ENCODE measurements at regions of chr10 and their contacts with region 1.

Region 1: DNA sequence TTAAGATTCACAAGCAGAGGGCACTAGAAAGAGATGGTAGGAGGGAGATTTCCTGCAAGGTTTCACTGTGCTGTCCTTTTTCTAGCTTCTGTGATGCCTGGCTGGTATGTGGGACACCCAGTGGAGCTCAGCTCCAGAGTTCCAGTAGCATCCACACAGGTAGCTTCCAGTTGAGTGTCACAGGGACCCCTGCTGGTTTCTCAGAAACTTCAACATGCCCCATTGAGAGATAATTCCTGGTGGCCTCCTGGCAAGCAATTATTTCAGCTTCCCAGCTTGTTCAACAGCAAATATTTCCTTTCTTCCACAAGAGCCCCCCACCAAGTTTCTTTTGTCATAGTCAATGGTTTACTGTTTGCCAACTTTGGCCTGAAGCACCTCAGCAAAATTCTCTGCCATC is 858.7 kb downstream of the REEP3 start:
- DNase-seq: no peak
- ATAC-seq: no peak
- H3K4me3 ChIP-seq: no peak overlapping the region
- H3K4me3 Mint-ChIP-seq: no peak overlapping the region
- H3K27ac ChIP-seq: no peak overlapping the region
- H3K27ac Mint-ChIP-seq: no peak overlapping the region
- H3K4me1 ChIP-seq: no peaks in the 10 kb centered on the region
- H3K4me1 Mint-ChIP-seq: no peaks in the 10 kb centered on the region
- H3K27me3 ChIP-seq: no peaks in the 10 kb centered on the region
- H3K27me3 Mint-ChIP-seq: no peaks in the 10 kb centered on the region

Region 2: GRCh38 chr10:64041185-64041988 is 338.5 kb before region 1 on chr10:
- CTCF ChIA-PET with region 1: no interaction called
- POLR2A ChIA-PET with region 1: no interaction called
- intact Hi-C with region 1: loop called in 1 of 2 experiments (anchors 10 kb)
- DNase-seq: peak; percentile 63 to 90 (median 85)
- ATAC-seq: peak; percentile 99
- H3K4me3 ChIP-seq: peak overlapping the region; percentile 55
- H3K4me3 Mint-ChIP-seq: peak overlapping the region; percentile 50 to 83 (median 70)
- H3K27ac ChIP-seq: no peak overlapping the region
- H3K27ac Mint-ChIP-seq: peak overlapping the region in 1 of 9 donors; percentile 50
- H3K4me1 ChIP-seq: peaks cover 0 to 4% of the 10 kb centered on the region in 2 donors
- H3K4me1 Mint-ChIP-seq: peaks cover 3 to 11% (median 9%) of the 10 kb centered on the region in 7 donors
- H3K27me3 ChIP-seq: no peaks in the 10 kb centered on the region
- H3K27me3 Mint-ChIP-seq: peaks cover 3 to 10% (median 7%) of the 10 kb centered on the region in 5 donors

Region 3: GRCh38 chr10:64271983-64272382 is 107.9 kb before region 1 on chr10:
- CTCF ChIA-PET with region 1: no interaction called
- POLR2A ChIA-PET with region 1: no interaction called
- intact Hi-C with region 1: no loop called
- DNase-seq: no peak
- ATAC-seq: no peak
- H3K4me3 ChIP-seq: no peak overlapping the region
- H3K4me3 Mint-ChIP-seq: no peak overlapping the region
- H3K27ac ChIP-seq: no peak overlapping the region
- H3K27ac Mint-ChIP-seq: no peak overlapping the region
- H3K4me1 ChIP-seq: no peaks in the 10 kb centered on the region
- H3K4me1 Mint-ChIP-seq: no peaks in the 10 kb centered on the region
- H3K27me3 ChIP-seq: no peaks in the 10 kb centered on the region
- H3K27me3 Mint-ChIP-seq: no peaks in the 10 kb centered on the region